Esophagus muscularis mucosa (tissue), 4 donors: ENCODE measurements at regions of chr5 and their contacts with region 1.

Region 1: GRCh38 chr5:40755407-40756365 is at the start of gene TTC33:
- DNase-seq: peak; percentile 98
- H3K4me3 ChIP-seq: peak within 1 kb of the TSS; percentile 74 to 93 (median 82)
- H3K27ac ChIP-seq: peak within 1 kb of the TSS; percentile 87 to 92 (median 90)
- H3K4me1 ChIP-seq: peaks cover 13 to 25% (median 20%) of the 10 kb centered on the region in 4 donors
- H3K27me3 ChIP-seq: no peaks in the 10 kb centered on the region
- CTCF ChIP-seq: peak; percentile 70 to 82 (median 76)
- EP300 ChIP-seq: no peak
- POLR2A ChIP-seq: peak; percentile 36
- total RNA-seq, gene TTC33: 19.1 to 32.7 (median 24.0) TPM

Region 2: DNA sequence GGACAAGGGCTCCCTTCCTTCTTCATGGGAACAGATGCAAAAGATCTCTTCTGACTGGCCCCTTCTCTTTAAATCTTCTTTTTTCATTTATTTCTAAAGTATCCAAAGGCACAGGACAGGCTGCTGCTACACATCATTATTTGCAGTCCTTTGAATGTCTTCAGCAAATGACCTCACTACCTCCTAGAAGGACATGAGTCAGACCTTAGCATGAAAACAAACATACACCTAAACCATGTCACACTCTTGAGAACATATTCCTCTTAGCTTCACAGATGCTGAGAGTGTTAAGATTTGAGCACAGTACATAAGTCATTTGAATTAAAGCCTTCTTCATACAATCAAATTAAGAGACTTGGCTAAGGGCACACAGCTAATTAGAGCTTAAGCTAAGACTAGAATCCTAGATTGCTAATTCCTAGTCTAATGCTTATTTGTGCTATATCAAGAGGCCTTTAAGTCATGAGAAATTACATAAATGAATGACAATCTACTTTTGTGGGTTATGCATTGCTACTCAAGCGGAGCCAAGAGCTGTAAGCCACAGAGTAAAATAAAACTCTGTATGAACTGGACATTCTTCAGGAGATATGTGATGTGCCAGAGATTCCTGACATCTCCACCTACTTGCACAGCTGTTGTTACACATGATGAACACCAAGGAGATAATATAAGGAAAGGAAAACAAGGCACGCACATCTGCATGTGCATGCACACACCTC is 185.1 kb before region 1 on chr5:
- intact Hi-C with region 1: no loop called
- DNase-seq: no peak
- H3K4me3 ChIP-seq: no peak overlapping the region
- H3K27ac ChIP-seq: peak overlapping the region in 1 of 4 donors; percentile 38
- H3K4me1 ChIP-seq: no peaks in the 10 kb centered on the region
- H3K27me3 ChIP-seq: no peaks in the 10 kb centered on the region
- CTCF ChIP-seq: no peak
- EP300 ChIP-seq: no peak
- POLR2A ChIP-seq: no peak

Region 3: GRCh38 chr5:40834849-40835787 is 79.4 kb after region 1 on chr5 and contains the start of gene RPL37:
- intact Hi-C with region 1: loop called (anchors 5 kb)
- DNase-seq: peak; percentile 99
- H3K4me3 ChIP-seq: peak within 1 kb of the TSS; percentile 61 to 71 (median 66)
- H3K27ac ChIP-seq: peak within 1 kb of the TSS; percentile 93 to 97 (median 94)
- H3K4me1 ChIP-seq: peaks cover 16 to 35% (median 24%) of the 10 kb centered on the region in 4 donors
- H3K27me3 ChIP-seq: no peaks in the 10 kb centered on the region
- CTCF ChIP-seq: peak in 1 of 3 experiments; percentile 8
- EP300 ChIP-seq: no peak
- POLR2A ChIP-seq: peak; percentile 83
- total RNA-seq, gene RPL37: 119 to 984 (median 276) TPM

Region 4: GRCh38 chr5:40879163-40879942 is 123.7 kb after region 1 on chr5:
- intact Hi-C with region 1: loop called (anchors 2 kb)
- DNase-seq: no peak
- H3K4me3 ChIP-seq: no peak overlapping the region
- H3K27ac ChIP-seq: no peak overlapping the region
- H3K4me1 ChIP-seq: no peaks in the 10 kb centered on the region
- H3K27me3 ChIP-seq: no peaks in the 10 kb centered on the region
- CTCF ChIP-seq: peak; percentile 49 to 67 (median 61)
- EP300 ChIP-seq: no peak
- POLR2A ChIP-seq: no peak